H1 (cell line): ENCODE measurements at regions of chr6 and their contacts with region 1.

Region 1: GRCh38 chr6:43856005-43856765 is 86.2 kb downstream of the VEGFA start:
- DNase-seq: no peak
- H3K4me3 ChIP-seq: no peak overlapping the region
- H3K27ac ChIP-seq: no peak overlapping the region
- H3K4me1 ChIP-seq: peaks cover 0 to 6% (median 3%) of the 10 kb centered on the region in 4 experiments; a peak in 4 of 7 replicates
- H3K27me3 ChIP-seq: no peaks in the 10 kb centered on the region
- CTCF ChIP-seq: peak; percentile 42 to 71 (median 57); a peak in 3 of 4 replicates
- EP300 ChIP-seq: no peak
- POLR2A ChIP-seq: no peak
- RAD21 ChIP-seq: peak; percentile 35 to 58; a peak in 3 of 4 replicates

Region 2: DNA sequence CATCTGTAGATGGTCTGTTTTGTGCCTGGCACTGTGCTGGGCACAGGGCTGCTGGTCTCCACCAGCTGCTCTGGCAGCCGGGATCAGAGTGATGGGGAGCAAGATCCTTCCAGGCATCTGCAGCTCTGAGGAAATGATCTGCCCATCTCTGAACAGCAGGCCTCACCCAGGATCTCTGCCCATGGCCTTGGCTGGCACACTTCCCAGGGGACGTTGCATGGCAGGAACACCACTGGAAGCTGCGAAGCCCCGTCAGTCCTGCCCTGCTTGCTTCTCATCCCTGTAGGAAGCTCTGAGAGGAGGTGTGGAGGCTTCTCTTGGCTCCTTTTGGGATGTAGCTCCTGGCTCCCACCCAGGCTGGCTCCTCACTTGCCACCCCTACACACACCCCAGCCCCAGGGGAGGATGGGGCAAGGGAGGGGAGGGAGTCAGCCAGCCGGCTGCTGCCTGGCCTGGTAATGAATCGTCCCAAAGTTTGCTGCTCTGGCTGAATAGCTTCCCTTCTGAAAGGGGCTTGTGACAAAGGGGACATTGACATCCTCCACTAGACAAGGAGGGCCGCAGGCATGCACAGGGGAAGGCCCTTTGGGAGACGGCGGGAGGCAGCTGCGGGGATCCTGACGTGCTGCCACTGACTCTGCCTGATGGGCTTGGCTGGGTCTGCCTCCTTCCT is 22.8 kb after region 1 on chr6:
- CTCF ChIA-PET with region 1: interaction called, 22 read pairs
- POLR2A ChIA-PET with region 1: interaction called, 4 read pairs
- DNase-seq: no peak
- H3K4me3 ChIP-seq: no peak overlapping the region
- H3K27ac ChIP-seq: no peak overlapping the region
- H3K4me1 ChIP-seq: peaks cover 0 to 11% (median 1%) of the 10 kb centered on the region in 4 experiments; a peak in 5 of 7 replicates
- H3K27me3 ChIP-seq: no peaks in the 10 kb centered on the region; a peak in 1 of 7 replicates
- CTCF ChIP-seq: no peak
- EP300 ChIP-seq: no peak
- POLR2A ChIP-seq: no peak
- RAD21 ChIP-seq: no peak

Region 3: DNA sequence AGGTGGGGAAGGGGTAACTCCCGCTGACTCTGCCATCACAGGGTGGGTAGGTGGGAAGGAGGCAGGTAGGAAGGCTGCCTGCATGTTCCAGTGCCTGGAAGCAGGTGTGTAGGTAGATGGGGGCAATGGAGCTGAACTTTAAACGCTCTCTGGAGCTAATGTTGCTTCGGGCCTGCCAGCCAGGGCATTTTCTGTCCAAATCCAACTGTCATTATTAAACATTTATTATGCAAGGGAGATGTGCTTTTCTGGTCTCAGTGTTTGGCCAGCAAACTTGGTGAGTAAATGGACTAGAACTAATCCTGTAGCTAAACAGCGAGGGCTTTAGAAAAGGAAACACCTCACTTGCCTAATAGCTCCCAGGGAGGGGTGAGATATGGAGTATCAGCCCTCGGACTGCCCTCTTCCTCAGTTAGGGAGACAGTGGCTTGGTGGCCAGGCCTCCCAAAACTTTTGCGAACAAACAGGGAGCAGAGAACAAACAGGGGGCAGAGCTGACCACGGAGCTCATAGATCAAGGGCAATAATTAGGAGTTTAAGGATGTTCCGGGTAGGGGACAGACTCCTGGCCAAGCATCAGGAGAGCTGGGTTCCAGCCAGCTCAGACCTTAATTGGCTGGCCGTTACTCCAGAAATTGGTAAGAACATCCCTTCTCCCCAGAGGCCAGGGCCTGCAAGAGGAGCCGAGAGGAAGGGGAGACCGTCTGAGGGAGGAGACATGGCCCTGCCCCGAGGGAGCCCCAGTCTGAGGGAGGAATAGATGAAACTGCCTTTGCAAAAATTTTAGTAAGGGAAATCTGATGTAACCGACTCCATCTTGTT is 44.9 kb after region 1 on chr6:
- CTCF ChIA-PET with region 1: interaction called, 15 read pairs
- POLR2A ChIA-PET with region 1: interaction called, 3 read pairs
- DNase-seq: no peak
- H3K4me3 ChIP-seq: no peak overlapping the region
- H3K27ac ChIP-seq: no peak overlapping the region
- H3K4me1 ChIP-seq: no peaks in the 10 kb centered on the region
- H3K27me3 ChIP-seq: no peaks in the 10 kb centered on the region
- CTCF ChIP-seq: no peak
- EP300 ChIP-seq: no peak
- POLR2A ChIP-seq: no peak
- RAD21 ChIP-seq: no peak

Region 4: GRCh38 chr6:43937236-43938164 is 81.3 kb after region 1 on chr6:
- CTCF ChIA-PET with region 1: interaction called, 10 read pairs
- POLR2A ChIA-PET with region 1: no interaction called
- DNase-seq: no peak
- H3K4me3 ChIP-seq: no peak overlapping the region
- H3K27ac ChIP-seq: no peak overlapping the region
- H3K4me1 ChIP-seq: peaks cover 0 to 16% (median under 1%) of the 10 kb centered on the region in 4 experiments; a peak in 4 of 7 replicates
- H3K27me3 ChIP-seq: no peaks in the 10 kb centered on the region; a peak in 1 of 7 replicates
- CTCF ChIP-seq: no peak
- EP300 ChIP-seq: no peak
- POLR2A ChIP-seq: no peak
- RAD21 ChIP-seq: no peak